Posterior vena cava (tissue), 2 donors: ENCODE measurements at regions of chr3 and their contacts with region 1.

Region 1: DNA sequence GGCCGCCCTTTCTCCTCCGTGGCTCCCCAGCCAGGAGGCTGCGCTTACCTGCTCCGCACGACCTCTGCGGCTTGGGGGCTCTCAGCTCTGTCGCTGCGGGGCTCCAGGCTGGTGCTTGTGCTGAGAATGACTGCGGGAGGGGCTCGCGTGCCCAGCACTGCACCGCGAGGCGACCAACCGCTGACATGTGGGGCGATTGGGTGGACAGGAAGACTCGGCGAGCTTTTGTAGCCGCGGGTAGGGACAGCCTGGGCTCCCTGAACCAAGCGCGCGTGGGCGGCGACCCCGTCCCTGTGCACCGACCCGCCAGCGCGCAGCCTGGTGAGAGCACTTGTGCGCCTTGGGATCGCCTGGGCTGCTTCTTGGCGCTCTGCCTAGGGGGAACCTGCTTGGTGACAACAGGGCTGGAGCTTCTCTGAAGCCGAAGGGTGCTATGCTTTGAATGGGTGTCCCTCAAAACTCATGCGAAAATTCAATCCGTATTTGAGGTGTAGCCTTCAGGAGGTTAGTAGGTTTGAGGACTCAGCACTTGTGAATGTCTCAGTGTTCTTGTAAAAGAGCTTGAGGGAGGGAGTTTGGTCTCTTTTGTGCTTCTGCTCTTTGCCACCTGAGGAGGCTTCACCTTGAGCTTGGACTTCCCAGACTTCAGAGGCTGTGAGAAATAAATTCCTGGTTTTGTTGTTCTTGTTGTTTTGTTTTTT is 50.4 kb downstream of the IL12A start:
- DNase-seq: no peak

Region 2: DNA sequence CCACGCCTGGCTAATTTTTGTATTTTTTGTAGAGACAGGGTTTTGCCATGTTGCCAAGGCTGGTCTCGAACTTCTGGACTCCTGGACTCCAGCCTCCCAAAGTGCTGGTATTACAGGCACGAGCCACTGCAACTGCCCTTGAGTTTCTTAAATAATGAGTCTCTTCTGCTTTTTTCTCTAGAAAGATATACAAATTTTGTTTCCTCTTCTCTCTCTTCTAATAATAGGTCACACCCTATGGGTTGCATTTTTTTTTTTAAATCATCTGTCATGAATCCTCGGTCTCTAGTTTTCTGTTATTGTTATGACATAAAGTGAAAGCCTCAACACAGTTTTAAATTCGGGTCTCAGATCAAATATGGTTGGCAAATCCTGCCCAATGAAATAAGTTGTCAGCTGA is 60.8 kb after region 1 on chr3:
- intact Hi-C with region 1: loop called in 1 of 2 experiments (anchors 2 kb)
- DNase-seq: no peak

Region 3: GRCh38 chr3:160296591-160296990 is 257.6 kb after region 1 on chr3:
- intact Hi-C with region 1: no loop called
- DNase-seq: no peak